MCF 10A (cell line): ENCODE measurements at regions of chr9 and their contacts with region 1.

Region 1: GRCh38 chr9:90914868-90915483 is 113.4 kb downstream of the SYK start:
- DNase-seq: peak; percentile 85
- H3K4me3 Mint-ChIP-seq: no peak overlapping the region
- H3K27ac Mint-ChIP-seq: no peak overlapping the region
- H3K4me1 Mint-ChIP-seq: peaks cover 17% of the 10 kb centered on the region
- H3K27me3 Mint-ChIP-seq: no peaks in the 10 kb centered on the region
- CTCF ChIP-seq: peak; percentile 86

Region 2: DNA sequence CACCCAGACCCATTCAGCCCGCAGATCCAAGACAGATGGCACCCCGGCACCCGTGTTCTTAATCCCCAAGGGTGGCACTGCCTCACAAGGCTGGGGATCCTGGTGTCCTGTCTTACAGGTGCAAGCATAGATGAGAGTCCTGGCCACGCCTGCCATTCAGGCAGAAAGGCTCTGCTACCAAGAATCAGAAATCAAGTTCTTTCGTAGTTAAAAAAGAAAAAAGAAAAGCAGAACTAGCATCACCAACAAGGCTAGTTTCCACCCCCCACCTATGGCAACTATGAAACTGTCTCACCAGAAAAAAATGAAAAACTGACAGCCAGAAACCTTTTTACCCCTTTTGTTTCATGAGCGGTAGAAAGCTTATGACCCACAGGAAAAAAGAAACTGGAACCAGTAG is 57.1 kb after region 1 on chr9:
- CTCF ChIA-PET with region 1: interaction called, 7 read pairs
- POLR2A ChIA-PET with region 1: interaction called, 7 read pairs
- intact Hi-C with region 1: loop called (anchors 5 kb)
- DNase-seq: no peak
- H3K4me3 Mint-ChIP-seq: no peak overlapping the region
- H3K27ac Mint-ChIP-seq: peak overlapping the region; percentile 46
- H3K4me1 Mint-ChIP-seq: peaks cover 34% of the 10 kb centered on the region
- H3K27me3 Mint-ChIP-seq: no peaks in the 10 kb centered on the region
- CTCF ChIP-seq: no peak

Region 3: GRCh38 chr9:91001146-91001611 is 86.2 kb after region 1 on chr9:
- CTCF ChIA-PET with region 1: interaction called, 14 read pairs
- POLR2A ChIA-PET with region 1: interaction called, 13 read pairs
- intact Hi-C with region 1: no loop called
- DNase-seq: peak; percentile 99
- H3K4me3 Mint-ChIP-seq: no peak overlapping the region
- H3K27ac Mint-ChIP-seq: peak overlapping the region; percentile 88
- H3K4me1 Mint-ChIP-seq: peaks cover 36% of the 10 kb centered on the region
- H3K27me3 Mint-ChIP-seq: no peaks in the 10 kb centered on the region
- CTCF ChIP-seq: no peak

Region 4: GRCh38 chr9:91177661-91178280 is 262.8 kb after region 1 on chr9:
- CTCF ChIA-PET with region 1: interaction called, 15 read pairs
- POLR2A ChIA-PET with region 1: interaction called, 4 read pairs
- intact Hi-C with region 1: no loop called
- DNase-seq: peak; percentile 94
- H3K4me3 Mint-ChIP-seq: peak overlapping the region; percentile 57
- H3K27ac Mint-ChIP-seq: peak overlapping the region; percentile 89
- H3K4me1 Mint-ChIP-seq: peaks cover 50% of the 10 kb centered on the region
- H3K27me3 Mint-ChIP-seq: no peaks in the 10 kb centered on the region
- CTCF ChIP-seq: no peak

Region 5: DNA sequence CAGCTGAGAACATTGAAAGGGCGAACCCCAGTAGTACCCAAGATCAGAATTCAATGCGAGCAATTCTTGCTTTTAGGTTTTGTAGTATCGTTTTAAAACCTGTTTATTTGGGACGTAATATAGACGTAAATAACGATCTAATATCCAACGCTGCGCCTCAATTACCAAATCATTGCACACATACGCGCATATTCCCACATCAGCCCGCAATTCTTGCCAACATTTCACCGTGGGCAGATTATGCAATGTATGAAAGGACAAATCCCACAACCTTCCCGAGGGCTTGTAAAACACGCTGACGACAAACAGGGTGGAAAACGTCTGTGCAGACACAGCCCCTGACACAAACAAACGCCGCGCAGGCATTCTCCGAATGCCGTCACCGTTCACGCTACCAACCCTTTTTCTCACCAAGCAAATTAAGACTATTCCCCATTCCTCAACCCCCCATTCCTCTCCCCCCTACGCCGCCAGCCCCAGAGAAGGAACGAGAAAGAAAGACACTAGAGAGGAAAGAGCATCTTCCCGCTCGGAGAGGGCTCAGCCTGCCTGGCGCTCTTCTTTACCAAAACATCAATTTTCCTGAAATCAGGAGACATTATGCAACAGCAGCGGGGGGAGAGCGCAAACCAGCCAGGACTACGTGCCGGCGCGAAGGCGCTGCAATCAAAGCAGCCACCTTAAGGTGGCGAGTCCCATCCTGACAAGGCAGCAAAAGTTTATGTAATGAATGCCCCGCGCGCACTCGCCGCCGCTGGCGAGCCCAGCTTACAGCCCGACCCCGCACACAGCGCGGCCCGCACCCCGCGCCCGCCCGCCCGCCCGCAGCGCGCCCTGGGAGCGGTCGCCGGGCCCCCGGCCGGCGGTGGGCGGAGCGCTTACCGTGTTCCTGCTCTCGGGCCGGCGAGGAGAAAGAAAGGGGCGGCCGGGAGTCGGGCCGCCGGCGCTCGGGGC is 508.1 kb after region 1 on chr9:
- CTCF ChIA-PET with region 1: interaction called, 68 read pairs
- POLR2A ChIA-PET with region 1: interaction called, 24 read pairs
- intact Hi-C with region 1: loop called (anchors 1 kb)
- DNase-seq: peak; percentile 83
- H3K4me3 Mint-ChIP-seq: peak overlapping the region; percentile 100
- H3K27ac Mint-ChIP-seq: peak overlapping the region; percentile 99
- H3K4me1 Mint-ChIP-seq: peaks cover 41% of the 10 kb centered on the region
- H3K27me3 Mint-ChIP-seq: no peaks in the 10 kb centered on the region
- CTCF ChIP-seq: peak; percentile 24

Region 6: GRCh38 chr9:91727316-91727861 is 812.4 kb after region 1 on chr9:
- CTCF ChIA-PET with region 1: interaction called, 43 read pairs
- POLR2A ChIA-PET with region 1: interaction called, 3 read pairs
- intact Hi-C with region 1: loop called (anchors 1 kb)
- DNase-seq: peak; percentile 62
- H3K4me3 Mint-ChIP-seq: no peak overlapping the region
- H3K27ac Mint-ChIP-seq: no peak overlapping the region
- H3K4me1 Mint-ChIP-seq: peaks cover 14% of the 10 kb centered on the region
- H3K27me3 Mint-ChIP-seq: no peaks in the 10 kb centered on the region
- CTCF ChIP-seq: peak; percentile 63